ENCODE measurements at regions of chr4 and their contacts with region 1.

Region 1: DNA sequence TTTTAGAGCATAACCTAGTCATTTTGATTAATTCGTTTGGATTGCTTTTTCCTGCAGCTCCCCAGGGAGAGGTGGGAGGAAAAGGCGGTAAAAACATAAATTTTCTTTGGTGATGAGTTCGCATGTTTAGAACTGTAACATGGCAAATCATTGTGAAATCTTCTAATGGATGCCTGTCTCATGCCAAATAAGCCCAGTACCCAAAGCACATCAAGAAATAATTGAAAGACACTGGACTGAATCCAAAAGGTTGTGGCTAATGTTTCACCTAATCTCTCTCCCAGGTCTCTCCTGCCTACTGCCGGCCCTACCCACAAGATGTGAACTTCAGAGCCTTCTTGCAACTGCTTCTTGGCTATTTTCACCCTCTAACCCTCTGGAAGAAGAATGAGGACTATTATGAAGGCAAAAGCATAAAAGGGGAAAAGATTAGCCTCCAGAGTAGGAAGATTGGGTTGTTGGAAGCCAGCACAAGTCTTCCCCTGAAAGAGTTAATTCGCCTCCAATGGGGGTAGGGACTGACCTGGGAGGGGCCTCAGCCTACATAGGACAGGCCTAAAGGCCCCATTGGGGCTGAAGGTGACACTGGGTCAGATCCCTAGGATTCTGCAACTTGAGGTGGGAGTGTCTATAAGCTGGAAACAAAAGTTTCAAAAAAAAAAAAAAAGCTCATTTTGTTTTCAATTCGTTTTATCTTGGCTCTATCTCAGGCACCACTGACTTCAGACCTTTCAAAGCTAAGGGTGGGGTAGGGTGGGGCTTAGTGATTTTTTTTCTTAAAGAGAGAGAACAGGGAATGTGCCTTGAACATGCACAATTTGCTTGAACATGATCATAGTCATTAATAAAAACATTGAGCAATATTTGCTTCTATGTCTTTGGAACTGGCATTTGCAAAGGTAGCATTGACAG is 278.6 kb upstream of the KLF3 start:
- DNase-seq: no peak

Region 2: GRCh38 chr4:38154681-38155608 is 230.4 kb before region 1 on chr4:
- intact Hi-C with region 1: no loop called
- DNase-seq: peak; percentile 87

Region 3: DNA sequence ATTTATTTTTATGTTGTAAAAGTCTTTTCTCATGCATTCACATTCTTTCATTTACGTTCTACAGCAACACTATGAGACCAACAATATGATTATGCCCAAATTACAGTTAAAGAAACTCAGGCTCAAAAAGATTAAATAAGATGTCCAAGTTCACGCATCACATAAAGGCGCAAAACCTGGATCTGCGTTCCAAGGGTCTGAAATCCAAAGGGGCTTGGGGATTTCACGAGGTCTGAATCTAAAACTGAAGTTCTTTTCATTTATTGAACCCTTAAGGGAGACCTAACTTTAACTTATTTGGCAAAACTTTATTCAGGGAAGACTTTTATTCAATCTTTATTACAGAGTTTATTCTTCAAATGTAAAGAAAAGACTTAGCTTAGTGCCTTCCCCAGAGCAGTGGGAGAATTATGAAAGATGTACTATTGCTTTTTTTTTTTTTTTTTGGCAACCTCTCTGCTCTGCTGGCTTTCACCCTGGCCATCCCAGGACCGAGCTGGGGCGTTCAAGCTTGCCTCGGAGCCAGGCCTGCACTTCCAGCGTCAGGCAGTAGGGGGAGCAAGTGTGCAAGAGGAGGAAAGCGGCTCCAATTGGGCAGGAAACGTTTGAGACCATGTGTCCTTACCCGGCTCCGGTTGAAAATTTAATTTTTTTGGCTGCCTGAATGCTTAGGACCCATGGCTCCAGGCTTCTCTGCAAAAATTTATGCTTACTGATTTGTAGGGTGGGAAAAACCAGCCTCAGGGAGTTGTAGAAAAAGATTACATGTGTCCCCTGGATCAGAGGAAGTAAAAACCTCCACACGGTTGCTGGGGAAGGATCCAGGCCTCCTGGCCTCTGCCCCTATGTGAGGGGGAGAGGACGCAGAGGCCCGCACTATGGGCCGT is 65.7 kb before region 1 on chr4:
- intact Hi-C with region 1: no loop called
- DNase-seq: peak; percentile 98

Region 4: GRCh38 chr4:38547052-38547451 is 161.7 kb after region 1 on chr4:
- intact Hi-C with region 1: no loop called
- DNase-seq: no peak

Region 5: DNA sequence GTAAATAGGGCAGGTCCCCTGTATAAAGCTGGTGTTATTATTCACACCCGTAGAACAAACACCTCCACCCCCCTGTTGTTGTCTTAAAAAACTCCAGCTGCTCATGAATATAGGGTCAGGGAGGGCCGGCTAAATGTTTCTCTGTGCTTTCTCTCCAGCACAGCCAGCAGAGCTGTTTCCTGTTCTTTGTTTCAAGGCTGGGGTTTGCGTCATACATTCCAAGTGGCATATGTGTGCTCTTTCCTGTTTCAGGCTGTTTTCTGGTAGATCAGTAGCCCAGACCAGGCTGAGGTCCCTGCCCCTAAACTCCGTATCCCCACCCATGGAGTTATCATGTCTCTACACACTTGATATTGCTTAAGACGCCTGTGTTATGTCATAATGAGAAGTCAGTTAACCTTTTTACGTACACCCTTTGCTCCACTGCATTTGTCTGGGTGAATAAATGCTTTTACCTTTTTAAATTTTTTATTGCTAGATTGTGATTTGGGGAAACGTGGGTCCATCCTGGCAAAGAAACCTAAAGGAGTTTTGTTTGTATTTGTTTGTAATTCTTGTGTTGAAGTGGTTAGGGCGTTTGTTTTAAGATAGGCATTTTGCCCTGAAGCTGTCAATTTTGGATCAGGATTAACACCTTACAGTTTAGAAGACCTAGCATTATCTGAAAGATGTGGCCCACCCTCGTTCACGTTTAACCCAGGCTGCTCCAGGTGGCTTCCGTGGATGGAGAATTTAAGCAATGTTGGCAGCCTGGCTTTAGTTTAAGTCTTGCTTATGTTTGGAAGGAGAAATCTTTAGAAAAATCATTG is 281.9 kb after region 1 on chr4:
- intact Hi-C with region 1: loop called in 1 of 2 experiments (anchors 2 kb)
- DNase-seq: peak; percentile 88